Dendritic cell treated with granulocyte-macrophage colony-stimulating factor and Interleukin-4, amounts not matched to agents 40 ng/mL and 50 ng/mL, for 4 days (primary cell): ENCODE measurements at regions of chr15 and their contacts with region 1.

Region 1: GRCh38 chr15:50145451-50145872 is 26.4 kb upstream of the ATP8B4 start:
- H3K4me3 Mint-ChIP-seq: no peak overlapping the region
- H3K27ac Mint-ChIP-seq: no peak overlapping the region
- H3K4me1 Mint-ChIP-seq: peaks cover 39% of the 10 kb centered on the region
- H3K27me3 Mint-ChIP-seq: no peaks in the 10 kb centered on the region

Region 2: GRCh38 chr15:48810414-48811317 is 1334.8 kb before region 1 on chr15 and contains the start of gene CEP152:
- intact Hi-C with region 1: loop called (anchors 5 kb)
- H3K4me3 Mint-ChIP-seq: peak within 1 kb of the TSS; percentile 86
- H3K27ac Mint-ChIP-seq: peak within 1 kb of the TSS; percentile 94
- H3K4me1 Mint-ChIP-seq: peaks cover 22% of the 10 kb centered on the region
- H3K27me3 Mint-ChIP-seq: peaks cover 3% of the 10 kb centered on the region

Region 3: DNA sequence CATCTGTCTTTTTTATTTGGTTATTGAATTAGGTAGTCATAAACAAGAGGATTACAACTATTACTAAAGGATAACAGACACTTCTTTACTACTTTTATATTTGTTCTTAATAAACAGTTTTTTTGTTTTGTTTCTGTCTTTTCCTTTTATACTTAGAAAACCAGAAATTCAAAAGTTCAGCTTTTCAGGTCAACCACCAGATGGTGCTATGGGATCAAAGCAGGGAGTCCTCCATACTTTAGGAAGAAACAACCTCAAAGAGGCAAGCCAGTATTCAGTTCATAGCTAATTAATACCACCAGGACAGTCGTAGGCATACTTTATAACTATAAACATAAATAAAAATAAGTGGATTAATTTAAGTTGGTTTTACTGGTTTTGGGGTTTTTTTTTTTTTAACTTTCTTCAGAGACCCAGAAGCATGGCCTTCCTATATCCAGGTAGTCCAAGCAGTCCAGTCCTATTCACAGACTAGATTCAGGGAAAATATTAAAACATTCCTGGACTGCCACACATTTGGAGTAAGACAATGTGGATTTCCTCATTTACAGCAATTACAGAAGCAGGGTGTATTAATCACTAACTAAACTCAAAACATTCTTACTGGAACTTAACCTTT is 1283.5 kb before region 1 on chr15:
- intact Hi-C with region 1: loop called (anchors 1 kb)
- H3K4me3 Mint-ChIP-seq: no peak overlapping the region
- H3K27ac Mint-ChIP-seq: no peak overlapping the region
- H3K4me1 Mint-ChIP-seq: peaks cover 13% of the 10 kb centered on the region
- H3K27me3 Mint-ChIP-seq: no peaks in the 10 kb centered on the region

Region 4: GRCh38 chr15:49155110-49155833 is 990.2 kb before region 1 on chr15 and contains the start of gene COPS2:
- intact Hi-C with region 1: loop called (anchors 10 kb)
- H3K4me3 Mint-ChIP-seq: peak within 1 kb of the TSS; percentile 98
- H3K27ac Mint-ChIP-seq: peak within 1 kb of the TSS; percentile 96
- H3K4me1 Mint-ChIP-seq: peaks cover 25% of the 10 kb centered on the region
- H3K27me3 Mint-ChIP-seq: no peaks in the 10 kb centered on the region

Region 5: DNA sequence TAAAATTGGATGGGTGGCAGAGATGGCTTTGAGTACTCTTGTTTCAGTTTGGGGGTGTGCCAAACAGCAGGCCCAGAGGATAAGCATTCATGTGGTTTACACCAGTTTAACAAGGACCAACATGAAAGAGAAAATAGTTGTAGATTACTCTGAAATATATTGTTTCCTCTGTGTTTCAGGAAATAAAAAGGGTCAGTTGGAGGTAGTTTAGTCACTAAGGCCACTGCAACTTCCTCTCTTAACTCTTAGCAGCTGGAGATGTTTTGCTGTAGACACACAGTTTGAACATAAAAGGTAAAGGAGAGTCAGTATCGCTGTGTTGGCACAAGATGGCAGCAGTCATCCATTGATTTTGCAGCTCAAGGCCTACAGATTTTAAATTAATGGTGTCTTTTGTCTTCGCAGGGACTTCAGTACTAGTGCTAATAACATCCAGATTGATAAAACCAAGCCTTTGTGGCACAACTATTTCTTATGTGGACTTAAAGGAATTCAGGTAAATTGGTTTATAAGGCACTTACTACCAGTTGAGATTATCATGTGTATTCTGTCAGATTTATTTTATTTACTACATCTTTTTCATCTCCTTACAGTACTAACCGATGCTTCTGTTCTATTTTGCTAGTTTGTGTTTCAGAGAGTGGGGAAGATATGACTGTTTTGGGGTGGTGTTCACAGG is 909.9 kb before region 1 on chr15:
- intact Hi-C with region 1: loop called (anchors 2 kb)
- H3K4me3 Mint-ChIP-seq: no peak overlapping the region
- H3K27ac Mint-ChIP-seq: no peak overlapping the region
- H3K4me1 Mint-ChIP-seq: peaks cover 43% of the 10 kb centered on the region
- H3K27me3 Mint-ChIP-seq: no peaks in the 10 kb centered on the region

Region 6: DNA sequence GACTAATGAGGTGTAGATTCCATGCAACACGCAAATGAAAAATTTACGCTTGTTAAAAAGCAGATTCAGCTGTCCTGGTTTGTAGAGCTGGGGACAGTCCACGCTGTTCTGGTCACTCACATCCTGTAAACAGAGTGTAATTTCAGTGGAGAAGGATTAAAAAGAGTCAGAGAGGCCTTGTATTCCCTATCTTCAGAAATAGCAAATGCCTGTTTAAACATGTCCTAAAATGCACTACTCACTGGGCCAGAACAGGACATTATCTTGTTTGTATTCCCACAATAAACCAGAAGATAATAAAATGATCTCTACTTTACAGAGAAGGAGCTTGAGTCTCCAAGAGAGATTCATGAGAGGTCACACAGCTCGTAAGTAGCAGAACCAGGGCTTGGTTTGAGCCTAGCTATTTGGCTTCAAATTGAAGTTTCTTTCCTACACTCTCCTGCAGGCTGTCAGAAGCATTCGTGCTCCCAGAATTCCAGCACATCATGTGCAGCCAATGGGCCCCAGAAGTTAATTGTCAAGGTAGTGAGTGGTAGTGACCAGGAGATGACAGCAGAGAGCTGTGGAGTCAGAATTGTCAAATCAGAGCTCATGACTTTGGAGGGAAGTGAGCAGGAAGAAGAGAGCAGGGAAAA is 268.9 kb before region 1 on chr15:
- intact Hi-C with region 1: loop called (anchors 2 kb)
- H3K4me3 Mint-ChIP-seq: no peak overlapping the region
- H3K27ac Mint-ChIP-seq: no peak overlapping the region
- H3K4me1 Mint-ChIP-seq: peaks cover 13% of the 10 kb centered on the region
- H3K27me3 Mint-ChIP-seq: no peaks in the 10 kb centered on the region

Region 7: GRCh38 chr15:50315814-50316630 is 170.6 kb after region 1 on chr15:
- intact Hi-C with region 1: loop called (anchors 10 kb)
- H3K4me3 Mint-ChIP-seq: no peak overlapping the region
- H3K27ac Mint-ChIP-seq: no peak overlapping the region
- H3K4me1 Mint-ChIP-seq: no peaks in the 10 kb centered on the region
- H3K27me3 Mint-ChIP-seq: no peaks in the 10 kb centered on the region

Region 8: DNA sequence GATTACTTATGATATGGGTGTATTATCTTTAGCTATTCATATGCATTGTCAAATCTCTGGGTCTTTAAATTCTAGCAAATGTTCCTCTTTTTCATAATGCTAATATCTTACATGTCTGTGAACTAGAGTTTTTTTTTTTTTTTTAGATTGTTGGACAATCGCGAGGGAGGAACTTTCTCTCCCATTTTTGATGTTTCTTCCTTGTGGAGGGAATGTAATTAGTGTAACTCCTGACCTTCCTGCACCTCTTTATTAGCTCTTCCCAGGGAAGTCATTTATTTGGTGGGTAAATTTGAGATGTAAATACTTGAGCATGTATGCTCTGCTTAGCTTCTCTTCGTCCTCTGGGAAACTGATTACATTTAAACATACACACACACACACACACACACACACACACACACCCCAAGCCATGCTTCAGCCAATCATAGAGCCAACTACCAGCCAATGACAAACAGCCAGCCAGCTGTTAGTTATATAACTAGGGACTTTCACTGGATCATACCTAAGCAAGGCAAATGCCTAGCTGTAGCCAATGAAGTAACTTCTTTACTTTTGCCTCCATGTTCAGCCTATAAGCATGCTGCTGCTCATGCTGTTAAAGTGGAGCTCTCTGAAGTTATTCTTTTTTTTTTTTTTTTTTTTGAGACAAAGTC is 270.4 kb after region 1 on chr15:
- intact Hi-C with region 1: no loop called
- H3K4me3 Mint-ChIP-seq: no peak overlapping the region
- H3K27ac Mint-ChIP-seq: no peak overlapping the region
- H3K4me1 Mint-ChIP-seq: no peaks in the 10 kb centered on the region
- H3K27me3 Mint-ChIP-seq: no peaks in the 10 kb centered on the region